Activated T-helper 2 cell treated with anti-CD3 and anti-CD28 coated beads, Interferon-gamma antibody, Interleukin-2, Interleukin-4, amounts not matched to agents 10 μg/mL and 5 μg/mL and 100 μg/mL, durations not matched to agents 14 hours and 24 hours and 36 hours (primary cell): ENCODE measurements at regions of chr16 and their contacts with region 1.

Region 1: GRCh38 chr16:20704281-20704680 is 6.8 kb upstream of the ACSM1 start:
- DNase-seq: no peak
- H3K4me3 Mint-ChIP-seq: no peak overlapping the region
- H3K27ac Mint-ChIP-seq: no peak overlapping the region
- H3K4me1 Mint-ChIP-seq: no peaks in the 10 kb centered on the region
- H3K27me3 Mint-ChIP-seq: peaks cover 2% of the 10 kb centered on the region

Region 2: GRCh38 chr16:20236579-20237289 is 467.5 kb before region 1 on chr16:
- intact Hi-C with region 1: no loop called
- DNase-seq: no peak
- H3K4me3 Mint-ChIP-seq: no peak overlapping the region
- H3K27ac Mint-ChIP-seq: no peak overlapping the region
- H3K4me1 Mint-ChIP-seq: no peaks in the 10 kb centered on the region
- H3K27me3 Mint-ChIP-seq: no peaks in the 10 kb centered on the region

Region 3: DNA sequence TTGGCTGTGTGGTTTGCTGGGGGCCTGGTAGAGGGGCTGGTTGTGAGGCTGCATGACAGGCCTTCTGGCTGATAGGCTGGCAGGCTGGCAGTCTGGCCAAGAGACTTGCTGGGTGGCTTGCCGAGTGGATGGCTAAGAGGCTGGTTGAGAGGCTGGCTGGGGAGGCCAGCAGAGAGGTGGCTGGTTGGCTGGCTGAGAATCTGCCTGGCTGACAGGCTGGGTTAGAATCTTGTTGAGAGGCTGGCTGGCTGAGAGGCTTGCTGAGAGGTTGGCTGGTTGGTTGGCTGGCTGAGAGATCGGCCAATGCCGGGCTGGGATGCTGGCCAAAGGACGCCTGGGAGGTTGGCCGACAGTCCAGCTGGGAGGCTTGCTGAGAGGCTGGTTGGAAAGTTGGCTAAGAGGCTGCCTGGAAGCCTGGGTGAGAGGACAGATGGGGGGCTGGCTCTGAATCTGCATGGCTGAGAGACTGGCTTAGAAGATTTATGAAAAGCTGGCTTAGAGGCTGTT is 92.3 kb before region 1 on chr16:
- intact Hi-C with region 1: loop called (anchors 10 kb)
- DNase-seq: no peak
- H3K4me3 Mint-ChIP-seq: no peak overlapping the region
- H3K27ac Mint-ChIP-seq: no peak overlapping the region
- H3K4me1 Mint-ChIP-seq: no peaks in the 10 kb centered on the region
- H3K27me3 Mint-ChIP-seq: peaks cover 3% of the 10 kb centered on the region

Region 4: GRCh38 chr16:20675488-20676267 is 28.6 kb before region 1 on chr16:
- intact Hi-C with region 1: no loop called
- DNase-seq: peak; percentile 23
- H3K4me3 Mint-ChIP-seq: peak overlapping the region; percentile 63
- H3K27ac Mint-ChIP-seq: peak overlapping the region; percentile 29
- H3K4me1 Mint-ChIP-seq: peaks cover 24% of the 10 kb centered on the region
- H3K27me3 Mint-ChIP-seq: peaks cover 2% of the 10 kb centered on the region

Region 5: DNA sequence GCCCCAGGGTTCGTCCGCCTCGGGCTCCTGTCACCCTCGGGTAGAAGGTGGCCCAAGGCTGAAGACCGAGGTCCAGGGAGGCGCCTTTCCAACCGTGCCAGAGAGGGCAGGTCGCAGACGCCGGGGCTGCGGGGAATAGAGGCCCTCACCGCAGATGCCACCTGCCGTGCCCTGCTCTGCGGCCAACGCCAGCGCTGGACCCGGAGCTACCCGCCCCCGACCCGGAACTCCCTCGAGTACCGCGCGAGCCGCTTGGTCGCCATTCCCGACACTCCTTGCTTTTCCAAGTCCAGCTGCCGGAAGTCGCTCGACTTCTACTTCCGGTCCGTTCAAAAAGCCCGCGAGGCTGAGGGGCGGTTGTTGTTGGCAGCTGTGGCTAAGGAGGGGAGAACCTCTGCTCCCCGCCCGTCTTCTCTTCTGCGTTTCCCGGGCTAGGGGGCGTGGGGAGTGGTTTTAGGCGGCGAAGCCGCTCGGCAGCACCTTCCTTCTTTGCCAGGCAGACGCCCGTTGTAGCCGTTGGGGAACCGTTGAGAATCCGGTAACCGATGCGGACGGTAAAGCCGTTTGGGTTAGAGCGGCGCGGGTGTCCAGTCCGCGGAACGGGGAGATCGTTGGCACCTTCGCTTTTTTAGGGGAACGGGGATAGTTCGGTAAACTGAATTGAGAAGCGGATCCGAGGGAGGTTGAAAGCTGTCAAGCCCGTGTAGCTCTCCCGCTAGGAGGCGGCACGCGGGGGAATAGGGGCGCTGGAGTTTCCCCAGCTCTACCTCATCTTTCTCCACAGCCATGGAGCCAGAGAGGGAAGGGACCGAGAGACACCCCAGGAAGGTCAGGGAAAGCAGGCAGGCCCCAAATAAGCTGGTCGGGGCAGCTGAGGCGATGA is 102.1 kb after region 1 on chr16 and contains the starts of genes ERI2 and REXO5:
- intact Hi-C with region 1: no loop called
- DNase-seq: peak; percentile 73
- H3K4me3 Mint-ChIP-seq: peak within 1 kb of the TSS; percentile 97
- H3K27ac Mint-ChIP-seq: peak within 1 kb of the TSS; percentile 91
- H3K4me1 Mint-ChIP-seq: peaks cover 28% of the 10 kb centered on the region
- H3K27me3 Mint-ChIP-seq: no peaks in the 10 kb centered on the region
- total RNA-seq, gene ERI2: 13.2 and 14.4 TPM in 2 replicates
- total RNA-seq, gene REXO5: 11.4 and 11.8 TPM in 2 replicates